Activated CD4-positive, alpha-beta T cell treated with anti-CD3 and anti-CD28 coated beads for 36 hours (primary cell): ENCODE measurements at regions of chr15 and their contacts with region 1.

Region 1: GRCh38 chr15:40440743-40441564 is at the start of gene BAHD1:
- DNase-seq: peak; percentile 97
- ATAC-seq: peak; percentile 92
- H3K4me3 Mint-ChIP-seq: peak within 1 kb of the TSS; percentile 82
- H3K27ac Mint-ChIP-seq: peak within 1 kb of the TSS; percentile 75
- H3K4me1 Mint-ChIP-seq: peaks cover 56% of the 10 kb centered on the region
- H3K27me3 Mint-ChIP-seq: peaks cover 29% of the 10 kb centered on the region
- total RNA-seq, gene BAHD1: 15.3 to 16.7 TPM

Region 2: GRCh38 chr15:39920510-39921273 is 520.3 kb before region 1 on chr15:
- CTCF ChIA-PET with region 1: no interaction called
- POLR2A ChIA-PET with region 1: no interaction called
- intact Hi-C with region 1: no loop called
- DNase-seq: peak; percentile 93
- ATAC-seq: peak; percentile 89
- H3K4me3 Mint-ChIP-seq: peak overlapping the region; percentile 73
- H3K27ac Mint-ChIP-seq: peak overlapping the region; percentile 73
- H3K4me1 Mint-ChIP-seq: peaks cover 29% of the 10 kb centered on the region
- H3K27me3 Mint-ChIP-seq: peaks cover 19% of the 10 kb centered on the region

Region 3: GRCh38 chr15:40160689-40161688 is 280.0 kb before region 1 on chr15 and contains the start of gene BUB1B:
- CTCF ChIA-PET with region 1: no interaction called
- POLR2A ChIA-PET with region 1: no interaction called
- intact Hi-C with region 1: loop called in 1 of 2 experiments (anchors 1 kb)
- DNase-seq: peak; percentile 96
- ATAC-seq: peak; percentile 95
- H3K4me3 Mint-ChIP-seq: no peak within 1 kb of the TSS
- H3K27ac Mint-ChIP-seq: no peak within 1 kb of the TSS
- H3K4me1 Mint-ChIP-seq: peaks cover 8% of the 10 kb centered on the region
- H3K27me3 Mint-ChIP-seq: no peaks in the 10 kb centered on the region
- total RNA-seq, gene BUB1B: 95.3 to 99.5 TPM

Region 4: GRCh38 chr15:40382580-40383456 is 58.1 kb before region 1 on chr15 and contains the start of gene KNSTRN:
- CTCF ChIA-PET with region 1: interaction called, 3 read pairs
- POLR2A ChIA-PET with region 1: no interaction called
- intact Hi-C with region 1: loop called in 1 of 2 experiments (anchors 1 kb)
- DNase-seq: peak; percentile 97
- ATAC-seq: peak; percentile 100
- H3K4me3 Mint-ChIP-seq: peak within 1 kb of the TSS; percentile 93
- H3K27ac Mint-ChIP-seq: peak within 1 kb of the TSS; percentile 78
- H3K4me1 Mint-ChIP-seq: peaks cover 22% of the 10 kb centered on the region
- H3K27me3 Mint-ChIP-seq: no peaks in the 10 kb centered on the region
- total RNA-seq, gene KNSTRN: 56.2 to 58.8 TPM

Region 5: DNA sequence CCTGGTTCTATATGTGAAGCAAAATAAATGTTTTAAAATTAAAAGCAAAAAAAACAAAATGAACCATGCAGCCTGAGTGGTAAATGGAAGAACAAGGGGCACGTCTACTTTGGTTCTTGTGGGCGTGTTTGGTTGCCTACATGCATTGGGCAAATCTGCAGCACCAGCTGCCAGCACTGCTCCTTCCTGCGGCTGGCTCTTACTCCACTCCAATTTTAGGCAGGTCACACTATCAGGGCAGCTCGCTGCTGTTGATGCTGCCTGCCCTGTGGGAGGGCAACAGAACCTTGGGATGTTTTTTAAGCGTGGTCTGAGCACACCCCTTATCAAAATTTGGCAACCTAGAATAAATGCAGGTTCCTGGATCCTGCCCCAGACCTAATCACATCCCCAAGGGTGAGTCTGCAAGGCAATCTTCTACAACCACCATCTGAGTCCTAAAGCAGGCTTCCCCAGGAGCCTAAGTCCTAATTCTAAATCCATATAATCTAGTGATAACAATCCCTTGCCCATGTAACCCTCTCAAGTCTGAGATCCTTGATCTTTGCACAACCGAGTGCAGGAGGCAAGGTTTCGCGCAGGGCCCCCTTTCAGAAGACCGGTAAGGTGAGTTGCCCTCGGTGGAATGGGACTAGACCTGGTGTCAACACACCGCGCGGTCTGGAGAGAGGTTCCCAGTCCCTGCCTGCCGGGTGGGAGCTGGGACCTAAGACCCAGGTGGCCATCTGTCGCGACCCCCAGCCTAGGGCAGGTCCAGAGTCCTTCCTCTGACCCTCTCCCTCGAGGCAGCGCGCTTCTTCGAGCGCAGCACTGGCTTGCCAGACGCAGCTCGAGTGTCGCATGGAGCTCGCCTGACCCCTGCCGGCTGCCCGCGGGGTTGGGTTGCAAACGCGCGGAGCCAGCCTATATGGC is 19.5 kb before region 1 on chr15:
- CTCF ChIA-PET with region 1: interaction called, 12 read pairs
- POLR2A ChIA-PET with region 1: no interaction called
- intact Hi-C with region 1: no loop called
- DNase-seq: peak; percentile 91
- ATAC-seq: peak; percentile 98
- H3K4me3 Mint-ChIP-seq: no peak overlapping the region
- H3K27ac Mint-ChIP-seq: no peak overlapping the region
- H3K4me1 Mint-ChIP-seq: no peaks in the 10 kb centered on the region
- H3K27me3 Mint-ChIP-seq: no peaks in the 10 kb centered on the region

Region 6: DNA sequence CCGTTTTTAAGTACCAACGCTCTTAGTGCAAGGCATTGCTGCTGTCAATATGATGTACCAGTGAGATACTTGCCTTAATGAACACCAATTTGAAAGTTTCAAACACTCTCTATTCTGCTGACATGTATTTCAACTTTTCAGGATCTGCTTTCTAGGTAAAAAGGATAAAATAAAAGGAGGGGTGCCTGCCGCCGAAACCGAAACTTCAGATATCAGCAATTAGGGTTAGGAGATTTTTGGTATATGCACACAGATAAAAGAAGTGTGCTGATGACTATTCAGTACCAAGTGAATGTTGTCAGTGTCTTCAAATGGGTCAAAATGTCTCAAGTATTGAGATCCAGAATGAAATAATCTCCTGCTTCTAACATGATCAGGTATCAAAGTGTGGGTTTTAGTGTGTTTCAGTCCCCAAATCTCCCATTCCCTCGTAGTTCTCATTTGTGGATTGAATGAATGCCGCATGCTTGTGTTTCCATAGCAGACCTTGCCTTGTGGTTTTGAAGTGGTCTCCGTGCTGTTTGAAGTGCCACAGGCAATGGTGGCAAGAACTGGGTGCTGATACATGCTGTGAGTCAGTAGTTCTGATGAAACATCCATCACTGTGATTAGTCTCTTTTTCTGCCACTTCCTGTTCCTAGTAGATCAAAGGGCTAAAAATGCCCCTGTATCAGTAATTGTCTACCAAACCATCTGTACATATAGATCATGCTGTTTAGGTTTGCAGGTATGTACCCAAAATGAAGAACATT is 52.3 kb after region 1 on chr15:
- CTCF ChIA-PET with region 1: no interaction called
- POLR2A ChIA-PET with region 1: no interaction called
- intact Hi-C with region 1: loop called in 1 of 2 experiments (anchors 1 kb)
- DNase-seq: peak; percentile 83
- ATAC-seq: peak; percentile 95
- H3K4me3 Mint-ChIP-seq: peak overlapping the region; percentile 13
- H3K27ac Mint-ChIP-seq: peak overlapping the region; percentile 86
- H3K4me1 Mint-ChIP-seq: peaks cover 35% of the 10 kb centered on the region
- H3K27me3 Mint-ChIP-seq: peaks cover 3% of the 10 kb centered on the region

Region 7: GRCh38 chr15:40564591-40565332 is 123.8 kb after region 1 on chr15 and contains the start of gene CCDC32:
- CTCF ChIA-PET with region 1: no interaction called
- POLR2A ChIA-PET with region 1: no interaction called
- intact Hi-C with region 1: loop called in 1 of 2 experiments (anchors 1 kb)
- DNase-seq: peak; percentile 97
- ATAC-seq: peak; percentile 97
- H3K4me3 Mint-ChIP-seq: peak within 1 kb of the TSS; percentile 96
- H3K27ac Mint-ChIP-seq: peak within 1 kb of the TSS; percentile 93
- H3K4me1 Mint-ChIP-seq: peaks cover 44% of the 10 kb centered on the region
- H3K27me3 Mint-ChIP-seq: no peaks in the 10 kb centered on the region
- total RNA-seq, gene CCDC32: 14.2 to 24.5 TPM

Region 8: GRCh38 chr15:40694688-40695468 is 253.9 kb after region 1 on chr15 and contains the start of gene RAD51:
- CTCF ChIA-PET with region 1: no interaction called
- POLR2A ChIA-PET with region 1: no interaction called
- intact Hi-C with region 1: loop called in 1 of 2 experiments (anchors 1 kb)
- DNase-seq: peak; percentile 96
- ATAC-seq: peak; percentile 93
- H3K4me3 Mint-ChIP-seq: peak within 1 kb of the TSS; percentile 95
- H3K27ac Mint-ChIP-seq: peak within 1 kb of the TSS; percentile 98
- H3K4me1 Mint-ChIP-seq: peaks cover 20% of the 10 kb centered on the region
- H3K27me3 Mint-ChIP-seq: no peaks in the 10 kb centered on the region
- total RNA-seq, gene RAD51: 73.5 to 75.3 TPM

Region 9: DNA sequence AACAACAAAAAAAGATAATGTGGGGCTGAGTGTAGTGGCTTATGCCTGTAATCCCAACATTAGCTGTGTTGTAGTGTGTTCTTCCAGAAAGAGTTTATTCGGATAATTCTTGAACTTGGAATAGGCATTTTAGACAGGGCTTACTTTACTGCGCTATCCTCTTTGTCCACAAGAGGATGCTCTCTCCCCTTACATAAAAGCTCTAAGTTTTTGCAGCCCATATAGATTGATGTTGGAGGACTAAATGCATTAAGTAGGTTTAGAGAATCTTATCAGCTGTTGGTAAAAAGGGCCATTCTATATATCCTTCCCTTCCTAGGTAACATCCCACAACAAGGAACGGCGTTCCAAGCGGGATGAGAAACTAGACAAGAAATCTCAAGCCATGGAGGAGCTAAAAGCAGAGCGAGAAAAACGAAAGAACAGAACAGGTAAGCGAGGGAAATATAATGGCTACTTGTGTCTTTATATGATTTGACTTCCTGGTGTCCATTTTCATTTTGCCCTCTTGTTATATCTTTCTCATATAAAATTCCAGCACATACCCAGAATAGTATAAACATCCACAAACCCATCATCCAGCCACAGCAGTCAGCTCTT is 1025.0 kb after region 1 on chr15:
- CTCF ChIA-PET with region 1: no interaction called
- POLR2A ChIA-PET with region 1: no interaction called
- intact Hi-C with region 1: no loop called
- DNase-seq: peak; percentile 34
- ATAC-seq: peak; percentile 81
- H3K4me3 Mint-ChIP-seq: no peak overlapping the region
- H3K27ac Mint-ChIP-seq: no peak overlapping the region
- H3K4me1 Mint-ChIP-seq: no peaks in the 10 kb centered on the region
- H3K27me3 Mint-ChIP-seq: no peaks in the 10 kb centered on the region